Activated T-helper 2 cell treated with anti-CD3 and anti-CD28 coated beads, Interferon-gamma antibody, Interleukin-2, Interleukin-4, amounts not matched to agents 10 μg/mL and 5 μg/mL and 100 μg/mL, durations not matched to agents 14 hours and 24 hours and 36 hours (primary cell): ENCODE measurements at regions of chr10 and their contacts with region 1.

Region 1: DNA sequence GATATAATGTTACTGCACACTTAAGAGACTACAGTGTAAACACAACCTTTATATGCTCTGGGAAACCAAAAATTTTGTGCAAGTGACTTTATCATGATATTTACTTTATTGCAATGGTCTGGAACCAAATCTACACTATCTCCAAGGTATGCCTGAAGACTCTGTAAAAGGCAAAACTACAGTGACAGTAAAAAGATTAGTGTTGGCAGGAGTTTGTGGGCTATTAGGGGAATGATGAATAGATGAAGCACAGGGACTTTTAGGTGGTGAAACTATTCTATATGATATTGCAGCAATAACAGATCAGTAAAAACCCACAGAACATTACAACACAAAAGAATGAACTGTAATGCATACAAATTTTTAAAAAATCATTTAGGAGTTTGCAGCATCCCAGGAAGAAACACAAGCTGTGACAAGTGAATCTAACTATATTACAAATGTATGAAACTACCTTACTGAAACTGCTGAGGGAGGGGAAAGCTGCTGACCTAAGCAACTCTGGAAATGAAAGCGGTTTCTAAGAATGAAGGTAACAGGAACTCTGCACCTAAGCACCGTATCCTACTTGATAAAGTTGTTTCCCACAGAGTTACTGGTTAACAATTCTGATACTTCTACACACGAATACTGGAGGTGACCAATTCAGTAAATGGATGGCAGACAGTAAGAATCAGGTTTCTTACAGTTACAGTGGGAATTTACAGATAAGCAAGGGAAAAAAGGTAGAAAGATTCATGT is 82.6 kb downstream of the ATE1 start:
- DNase-seq: no peak
- H3K4me3 Mint-ChIP-seq: no peak overlapping the region
- H3K27ac Mint-ChIP-seq: no peak overlapping the region
- H3K4me1 Mint-ChIP-seq: peaks cover 6% of the 10 kb centered on the region
- H3K27me3 Mint-ChIP-seq: no peaks in the 10 kb centered on the region

Region 2: DNA sequence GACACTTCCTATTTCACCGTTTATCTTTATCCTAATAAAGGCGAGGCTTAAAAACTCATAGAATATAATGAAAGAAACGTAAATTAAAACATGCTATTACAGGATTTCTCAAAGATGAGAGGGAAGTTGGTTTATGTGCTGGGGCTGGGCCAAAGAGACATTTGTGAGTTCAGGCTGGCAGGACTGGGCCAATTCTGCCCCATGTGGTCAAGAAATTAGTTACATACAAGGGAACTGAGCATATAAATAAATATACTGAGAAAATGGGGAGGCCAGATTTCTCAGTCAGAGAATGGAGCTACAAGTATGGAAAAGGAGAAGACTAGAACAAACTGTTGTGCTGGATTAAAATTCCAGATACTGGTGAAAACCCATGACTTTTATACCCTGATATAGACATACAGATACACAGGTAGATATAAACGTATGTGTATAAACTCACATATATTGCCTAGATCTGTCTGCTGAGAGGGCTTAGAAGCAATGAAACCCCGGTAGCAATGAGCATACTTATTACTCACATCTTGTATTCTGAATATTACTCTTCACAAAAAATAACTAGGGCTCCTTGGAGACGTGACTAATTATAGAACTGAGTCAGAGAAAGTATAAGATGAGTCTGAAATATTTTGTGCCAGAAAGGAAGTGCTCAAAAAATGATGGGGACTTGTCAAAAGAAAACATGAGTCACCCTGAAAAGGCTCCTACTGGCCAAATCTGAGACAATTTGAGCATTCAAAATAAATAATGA is 91.3 kb before region 1 on chr10:
- intact Hi-C with region 1: loop called (anchors 1 kb)
- DNase-seq: no peak
- H3K4me3 Mint-ChIP-seq: no peak overlapping the region
- H3K27ac Mint-ChIP-seq: no peak overlapping the region
- H3K4me1 Mint-ChIP-seq: peaks cover 15% of the 10 kb centered on the region
- H3K27me3 Mint-ChIP-seq: peaks cover 3% of the 10 kb centered on the region

Region 3: DNA sequence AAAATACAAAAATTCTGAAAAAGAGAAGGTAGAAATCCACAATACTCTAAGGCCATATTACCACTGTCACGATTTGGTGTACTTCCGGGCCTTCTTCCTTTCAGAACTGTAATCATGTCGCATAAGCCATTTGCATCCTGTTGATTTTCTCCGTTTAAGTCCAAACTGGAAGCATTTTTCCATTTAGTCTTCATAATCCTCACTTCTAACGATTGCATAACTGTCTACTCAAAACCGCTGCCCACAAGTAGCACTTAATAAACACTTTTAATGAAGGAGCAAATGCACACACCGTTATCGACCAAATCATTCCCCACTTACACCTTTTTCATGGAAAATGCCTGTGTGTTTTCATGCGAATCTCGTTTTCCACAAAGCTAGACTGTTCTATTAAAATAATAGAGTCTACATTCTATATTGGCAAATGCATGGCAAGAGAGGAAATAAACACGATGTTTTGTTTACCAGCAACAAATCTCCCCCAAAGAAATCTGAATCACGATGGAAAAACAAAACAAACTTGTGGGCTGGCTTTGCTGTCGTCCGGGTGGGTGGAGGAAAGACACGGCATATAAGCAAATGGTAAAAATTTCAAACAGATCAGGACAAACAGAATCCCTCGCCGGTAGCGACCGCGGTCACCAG is 81.6 kb after region 1 on chr10:
- intact Hi-C with region 1: no loop called
- DNase-seq: no peak
- H3K4me3 Mint-ChIP-seq: peak overlapping the region; percentile 94
- H3K27ac Mint-ChIP-seq: peak overlapping the region; percentile 91
- H3K4me1 Mint-ChIP-seq: peaks cover 18% of the 10 kb centered on the region
- H3K27me3 Mint-ChIP-seq: no peaks in the 10 kb centered on the region